RWPE1 (cell line): ENCODE measurements at regions of chr22 and their contacts with region 1.

Region 1: DNA sequence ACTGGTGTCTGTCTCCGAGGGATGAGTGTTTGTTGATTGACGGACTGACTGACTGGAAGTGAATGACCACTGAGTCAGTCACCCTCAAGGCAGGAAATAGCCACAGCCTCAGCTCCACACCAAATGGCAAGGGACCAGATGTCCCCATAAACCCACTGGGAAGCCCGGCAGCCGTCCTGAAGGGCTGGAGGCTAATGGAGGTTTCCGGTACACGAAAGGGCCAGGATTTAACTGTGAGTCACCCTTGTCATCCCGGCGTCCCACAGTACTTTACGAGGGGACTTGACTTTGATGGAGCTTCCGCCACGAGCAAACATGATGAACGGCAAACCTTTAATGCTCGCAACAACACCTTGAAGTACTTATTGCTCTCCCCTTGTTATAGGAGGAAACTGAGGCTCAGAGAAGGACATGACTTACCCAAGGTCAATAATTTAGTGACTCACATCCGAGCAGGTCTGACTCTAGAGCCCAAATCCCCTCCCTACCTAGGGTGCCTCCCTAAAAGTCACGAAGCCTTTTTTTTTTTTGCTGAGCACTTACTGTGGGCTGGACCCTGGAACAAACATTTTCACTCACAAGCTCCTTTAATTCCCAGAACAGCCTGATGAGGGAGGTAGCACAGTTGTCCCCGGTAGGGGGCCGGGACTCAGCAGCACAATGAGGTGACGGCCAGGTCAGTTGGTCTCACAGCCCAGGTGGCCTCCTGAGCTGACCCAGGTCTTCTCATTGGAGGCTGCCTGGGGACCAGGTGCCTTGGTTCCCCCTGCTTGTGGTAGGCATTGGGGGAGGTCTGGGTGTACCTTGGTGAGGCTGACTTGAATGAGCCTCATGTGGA is 25.2 kb upstream of the GCAT start:
- DNase-seq: no peak
- H3K27ac ChIP-seq: peak overlapping the region; percentile 70
- CTCF ChIP-seq: no peak

Region 2: DNA sequence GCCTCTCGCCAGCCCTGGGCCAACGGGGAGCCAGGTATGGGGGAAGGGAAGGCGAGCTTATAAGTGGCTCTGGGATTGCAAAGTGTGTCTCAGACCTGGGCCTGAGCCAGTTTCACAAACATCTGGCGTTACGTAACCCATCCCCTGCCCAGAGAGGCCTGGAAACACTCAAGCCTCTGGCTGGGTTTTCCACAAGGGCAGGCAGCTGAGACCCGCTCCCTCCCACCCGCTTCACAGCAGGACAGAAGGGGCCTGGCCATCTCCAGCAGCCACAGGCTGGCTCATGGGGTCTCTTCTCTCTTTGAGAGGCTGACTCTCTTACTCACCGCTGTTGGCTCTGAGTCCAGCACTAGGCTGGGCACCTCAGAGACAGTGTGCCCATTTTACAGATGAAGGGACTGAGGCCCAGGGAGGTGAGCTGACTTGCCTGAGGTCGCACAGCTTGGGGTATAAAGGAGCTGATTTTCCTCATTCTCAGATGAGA is 41.2 kb before region 1 on chr22:
- CTCF ChIA-PET with region 1: no interaction called
- POLR2A ChIA-PET with region 1: no interaction called
- DNase-seq: peak; percentile 60
- H3K27ac ChIP-seq: peak overlapping the region; percentile 95
- CTCF ChIP-seq: no peak

Region 3: DNA sequence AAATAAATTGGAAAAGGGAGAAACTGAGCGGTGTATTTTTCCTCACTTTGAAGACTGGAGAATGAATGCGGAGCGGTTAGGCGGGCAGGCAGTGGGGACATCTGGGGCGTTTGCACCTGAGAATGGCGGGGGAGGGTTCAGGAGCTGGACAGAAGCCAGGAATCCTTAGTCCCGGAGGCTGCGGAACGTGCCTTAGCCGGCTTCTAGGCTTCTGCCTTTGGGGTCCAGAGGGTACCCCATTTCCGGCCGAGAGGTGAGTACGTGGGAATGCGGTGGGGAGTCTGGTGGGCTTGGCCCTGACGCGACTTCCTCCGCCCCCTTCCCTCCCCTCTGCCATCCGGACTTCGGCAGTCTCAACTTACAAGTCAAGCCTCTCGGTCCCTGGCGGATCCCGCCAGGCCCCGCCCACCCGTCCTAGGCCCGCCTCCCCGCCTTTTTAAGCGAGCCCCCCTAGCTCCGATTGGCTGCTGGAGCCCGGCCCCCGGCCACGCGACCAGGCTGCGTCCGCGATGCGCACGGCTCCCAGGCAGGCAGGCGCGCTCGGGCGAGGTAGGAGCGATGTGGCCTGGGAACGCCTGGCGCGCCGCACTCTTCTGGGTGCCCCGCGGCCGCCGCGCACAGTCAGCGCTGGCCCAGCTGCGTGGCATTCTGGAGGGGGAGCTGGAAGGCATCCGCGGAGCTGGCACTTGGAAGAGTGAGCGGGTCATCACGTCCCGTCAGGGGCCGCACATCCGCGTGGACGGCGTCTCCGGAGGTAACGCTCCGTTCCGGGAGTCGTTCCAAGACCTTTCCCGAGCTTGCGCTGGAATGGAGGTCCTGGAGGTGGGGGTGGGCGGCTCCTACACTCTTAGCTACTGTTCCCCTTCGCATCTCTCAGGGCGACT is 25.1 kb after region 1 on chr22 and contains the start of gene GCAT:
- CTCF ChIA-PET with region 1: interaction called, 10 read pairs
- POLR2A ChIA-PET with region 1: no interaction called
- DNase-seq: peak; percentile 95
- H3K27ac ChIP-seq: peak within 1 kb of the TSS; percentile 85
- CTCF ChIP-seq: no peak